ENCODE measurements at regions of chr12 and their contacts with region 1.

Region 1: GRCh38 chr12:21483531-21483930 is 17.9 kb downstream of the RECQL start:
- DNase-seq: no peak
- H3K4me3 ChIP-seq: no peak overlapping the region
- H3K27ac ChIP-seq: no peak overlapping the region
- H3K4me1 ChIP-seq: no peaks in the 10 kb centered on the region
- H3K27me3 ChIP-seq: no peaks in the 10 kb centered on the region
- CTCF ChIP-seq: no peak

Region 2: GRCh38 chr12:20740972-20741371 is 742.6 kb before region 1 on chr12:
- CTCF ChIA-PET with region 1: no interaction called
- POLR2A ChIA-PET with region 1: interaction called, 22 read pairs
- intact Hi-C with region 1: no loop called
- DNase-seq: no peak
- H3K4me3 ChIP-seq: no peak overlapping the region
- H3K27ac ChIP-seq: no peak overlapping the region
- H3K4me1 ChIP-seq: no peaks in the 10 kb centered on the region
- H3K27me3 ChIP-seq: no peaks in the 10 kb centered on the region
- CTCF ChIP-seq: no peak